Naive thymus-derived CD4-positive, alpha-beta T cell (primary cell): ENCODE measurements at regions of chr12 and their contacts with region 1.

Region 1: DNA sequence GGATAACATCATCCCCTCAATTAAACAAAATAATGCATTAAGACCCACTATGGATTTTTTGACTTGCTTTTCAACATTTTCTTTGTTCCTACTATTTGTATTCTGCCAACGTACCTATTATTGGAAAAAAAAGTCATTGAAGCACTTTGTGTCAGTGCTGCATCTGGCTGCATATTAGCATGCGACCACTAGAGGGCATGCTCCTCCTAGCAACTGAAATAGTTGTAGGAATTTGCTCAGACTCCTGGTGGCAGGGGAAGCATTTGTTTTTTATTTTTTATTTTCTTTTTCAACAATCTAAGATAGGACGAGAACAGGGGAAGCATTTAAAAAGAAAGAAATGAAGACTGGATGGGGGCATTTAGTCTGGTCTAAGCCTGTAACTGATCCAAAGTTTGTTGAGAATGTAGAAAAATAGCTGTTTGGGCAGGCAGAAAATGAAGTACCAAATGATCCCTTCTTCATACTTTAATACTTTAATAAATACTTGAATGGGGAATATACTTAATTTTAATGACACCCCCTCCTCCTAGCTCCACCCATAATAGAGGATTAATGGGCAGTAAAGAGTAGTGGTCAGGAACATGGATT is 14.5 kb upstream of the CLEC4A start:
- DNase-seq: peak; percentile 47 to 84 (median 71)
- ATAC-seq: peak; percentile 99
- H3K4me3 ChIP-seq: no peak overlapping the region
- H3K4me3 Mint-ChIP-seq: no peak overlapping the region
- H3K27ac ChIP-seq: no peak overlapping the region
- H3K27ac Mint-ChIP-seq: peak overlapping the region in 3 of 9 donors; percentile 0 to 38 (median 22)
- H3K4me1 ChIP-seq: no peaks in the 10 kb centered on the region
- H3K4me1 Mint-ChIP-seq: peaks cover 0 to 6% (median 5%) of the 10 kb centered on the region in 7 donors
- H3K27me3 ChIP-seq: no peaks in the 10 kb centered on the region
- H3K27me3 Mint-ChIP-seq: no peaks in the 10 kb centered on the region

Region 2: GRCh38 chr12:6723607-6724396 is 1385.1 kb before region 1 on chr12 and contains the start of gene COPS7A:
- CTCF ChIA-PET with region 1: no interaction called
- POLR2A ChIA-PET with region 1: no interaction called
- intact Hi-C with region 1: no loop called
- DNase-seq: peak; percentile 77 to 94 (median 90)
- ATAC-seq: peak; percentile 93
- H3K4me3 ChIP-seq: peak within 1 kb of the TSS; percentile 63
- H3K4me3 Mint-ChIP-seq: peak within 1 kb of the TSS; percentile 80 to 97 (median 92)
- H3K27ac ChIP-seq: peak within 1 kb of the TSS; percentile 75
- H3K27ac Mint-ChIP-seq: peak within 1 kb of the TSS; percentile 90 to 98 (median 96)
- H3K4me1 ChIP-seq: peaks cover 10 to 11% of the 10 kb centered on the region in 2 donors
- H3K4me1 Mint-ChIP-seq: peaks cover 24 to 34% (median 27%) of the 10 kb centered on the region in 7 donors
- H3K27me3 ChIP-seq: no peaks in the 10 kb centered on the region
- H3K27me3 Mint-ChIP-seq: no peaks in the 10 kb centered on the region
- total RNA-seq, gene COPS7A: 21.9 to 38.7 (median 30.1) TPM

Region 3: DNA sequence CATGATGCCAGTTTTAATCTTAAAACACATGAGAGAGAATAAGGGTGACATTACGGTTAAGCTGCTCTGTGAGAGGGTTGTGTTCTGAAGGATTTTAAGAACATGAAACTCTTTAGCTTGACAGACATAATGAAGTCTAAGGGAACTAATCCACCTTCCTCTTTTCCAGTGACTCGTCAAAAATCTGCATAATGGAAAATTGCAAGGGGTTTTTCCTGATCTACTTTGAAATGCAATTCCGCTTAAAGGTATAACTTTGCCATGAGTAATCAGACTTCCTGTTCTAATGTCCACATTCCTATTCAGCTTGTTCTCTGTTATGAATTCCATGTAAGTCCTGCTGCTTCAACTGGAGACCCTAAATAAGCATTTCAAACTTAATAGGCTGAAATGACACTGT is 47.9 kb after region 1 on chr12 and contains the start of gene ZNF705A:
- CTCF ChIA-PET with region 1: no interaction called
- POLR2A ChIA-PET with region 1: no interaction called
- intact Hi-C with region 1: loop called in 1 of 2 experiments (anchors 10 kb)
- DNase-seq: no peak
- ATAC-seq: peak; percentile 61
- H3K4me3 ChIP-seq: no peak within 1 kb of the TSS
- H3K4me3 Mint-ChIP-seq: no peak within 1 kb of the TSS
- H3K27ac ChIP-seq: no peak within 1 kb of the TSS
- H3K27ac Mint-ChIP-seq: no peak within 1 kb of the TSS
- H3K4me1 ChIP-seq: peaks cover 0 to 27% of the 10 kb centered on the region in 2 donors
- H3K4me1 Mint-ChIP-seq: peaks cover 12 to 38% (median 33%) of the 10 kb centered on the region in 7 donors
- H3K27me3 ChIP-seq: no peaks in the 10 kb centered on the region
- H3K27me3 Mint-ChIP-seq: peaks cover 0 to 56% (median 0%) of the 10 kb centered on the region in 5 donors
- total RNA-seq, gene ZNF705A: 0.12 TPM in 1 of 5 experiments, not detected in the others